H1 (cell line): ENCODE measurements at regions of chr20 and their contacts with region 1.

Region 1: GRCh38 chr20:50179507-50180016 is 11.1 kb upstream of the CEBPB start:
- DNase-seq: no peak
- H3K4me3 ChIP-seq: no peak overlapping the region
- H3K27ac ChIP-seq: no peak overlapping the region
- H3K4me1 ChIP-seq: peaks cover 0 to 3% (median 0%) of the 10 kb centered on the region in 4 experiments; a peak in 2 of 7 replicates
- H3K27me3 ChIP-seq: no peaks in the 10 kb centered on the region
- CTCF ChIP-seq: no peak
- EP300 ChIP-seq: no peak
- POLR2A ChIP-seq: no peak
- RAD21 ChIP-seq: no peak

Region 2: DNA sequence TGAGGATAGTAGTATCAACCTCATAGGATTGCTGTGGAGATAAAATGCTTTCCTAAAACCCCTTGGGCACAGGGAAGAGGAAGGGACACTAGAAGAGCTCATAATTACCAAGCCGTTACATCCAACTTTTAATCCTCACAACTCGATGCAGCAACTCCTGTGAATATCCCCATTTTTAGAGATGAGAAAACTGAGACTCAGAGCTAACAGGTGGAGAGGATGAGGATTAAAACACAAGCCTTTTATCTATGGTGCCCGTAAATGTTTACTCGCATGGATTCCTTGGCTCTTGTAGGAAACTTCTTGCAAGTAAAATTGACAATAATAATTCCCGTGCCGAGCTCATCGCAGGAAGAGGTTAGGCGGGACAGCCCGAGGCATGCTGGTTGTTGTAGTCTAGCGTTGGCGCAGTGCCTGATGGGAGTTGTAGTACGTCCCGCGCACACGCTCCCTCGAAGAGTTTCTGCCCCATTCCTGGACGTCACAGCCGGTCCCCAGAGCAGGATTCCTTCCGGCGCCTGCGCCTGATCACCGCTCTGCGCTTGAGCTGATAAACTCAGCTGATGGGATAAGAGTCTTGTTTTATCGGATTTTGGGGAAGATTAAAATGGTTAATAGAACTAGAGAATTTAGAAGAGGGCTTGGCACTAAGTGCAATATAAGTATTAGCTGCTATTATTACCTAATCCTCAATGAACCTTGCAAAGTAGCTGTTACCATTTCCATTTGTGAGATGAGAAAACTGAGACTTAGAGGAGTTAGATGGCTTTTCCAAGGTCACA is 63.8 kb before region 1 on chr20:
- CTCF ChIA-PET with region 1: interaction called, 160 read pairs
- POLR2A ChIA-PET with region 1: interaction called, 12 read pairs
- DNase-seq: peak; percentile 81 to 89
- H3K4me3 ChIP-seq: peak overlapping the region; percentile 69 to 84 (median 78)
- H3K27ac ChIP-seq: no peak overlapping the region
- H3K4me1 ChIP-seq: peaks cover 2 to 16% (median 7%) of the 10 kb centered on the region in 4 experiments; a peak in 6 of 7 replicates
- H3K27me3 ChIP-seq: no peaks in the 10 kb centered on the region
- CTCF ChIP-seq: no peak
- EP300 ChIP-seq: no peak
- POLR2A ChIP-seq: peak in 1 of 2 experiments; percentile 65; a peak in 2 of 3 replicates
- RAD21 ChIP-seq: no peak

Region 3: DNA sequence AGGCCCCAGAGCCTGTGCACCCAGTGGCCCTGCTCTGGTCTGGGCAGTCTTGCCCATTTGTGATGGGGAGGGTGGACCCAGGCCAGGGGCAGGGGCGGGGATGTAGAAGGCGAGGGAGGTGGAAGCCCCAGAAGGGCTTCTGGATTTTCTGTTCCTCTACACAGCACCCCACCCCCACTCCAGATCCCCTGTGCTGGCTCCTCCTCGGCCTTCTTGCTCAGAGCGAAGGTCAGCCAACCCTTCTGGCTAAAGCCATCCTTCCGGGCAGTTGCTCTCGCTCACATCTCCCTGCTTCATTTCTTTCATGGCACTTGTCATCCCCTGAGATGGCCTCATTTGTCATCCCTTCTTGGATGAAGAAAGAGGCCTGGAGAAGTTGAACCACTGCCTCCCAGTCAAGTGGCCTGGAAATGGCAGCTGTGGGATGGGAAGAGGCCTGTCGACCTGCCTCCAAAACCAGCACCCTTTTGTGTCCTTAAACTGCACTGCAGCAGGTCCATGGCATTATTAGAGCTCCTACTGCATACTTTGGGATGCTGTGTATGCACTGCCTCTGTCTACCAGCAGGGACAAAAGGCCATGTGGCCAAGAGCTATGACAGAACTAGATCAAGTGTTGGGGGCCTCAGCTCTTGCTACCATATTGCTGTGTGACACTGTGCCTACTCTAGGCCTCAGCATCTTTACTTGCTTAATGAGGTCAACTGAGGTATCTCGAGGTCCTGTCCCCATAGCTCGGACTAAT is 45.9 kb before region 1 on chr20:
- CTCF ChIA-PET with region 1: interaction called, 11 read pairs
- POLR2A ChIA-PET with region 1: no interaction called
- DNase-seq: no peak
- H3K4me3 ChIP-seq: no peak overlapping the region
- H3K27ac ChIP-seq: no peak overlapping the region
- H3K4me1 ChIP-seq: peaks cover 0 to 2% (median 0%) of the 10 kb centered on the region in 4 experiments; a peak in 1 of 7 replicates
- H3K27me3 ChIP-seq: no peaks in the 10 kb centered on the region
- CTCF ChIP-seq: peak in 1 of 3 experiments; percentile 27; a peak in 1 of 4 replicates
- EP300 ChIP-seq: no peak
- POLR2A ChIP-seq: no peak
- RAD21 ChIP-seq: no peak

Region 4: GRCh38 chr20:50153485-50154377 is 25.8 kb before region 1 on chr20 and contains the start of gene PEDS1:
- CTCF ChIA-PET with region 1: interaction called, 40 read pairs
- POLR2A ChIA-PET with region 1: no interaction called
- DNase-seq: peak in 1 of 2 experiments; percentile 87
- H3K4me3 ChIP-seq: peak within 1 kb of the TSS; percentile 61 to 98 (median 86)
- H3K27ac ChIP-seq: peak within 1 kb of the TSS; percentile 26; the same call in 1 of the 2 replicates
- H3K4me1 ChIP-seq: peaks cover 9 to 27% (median 16%) of the 10 kb centered on the region in 4 experiments
- H3K27me3 ChIP-seq: peaks cover 0 to 3% (median under 1%) of the 10 kb centered on the region in 4 experiments; a peak in 2 of 7 replicates
- CTCF ChIP-seq: no peak
- EP300 ChIP-seq: no peak
- POLR2A ChIP-seq: peak; percentile 70 to 75
- RAD21 ChIP-seq: no peak
- total RNA-seq, gene PEDS1: 28.9 and 33.3 TPM in 2 replicates

Region 5: DNA sequence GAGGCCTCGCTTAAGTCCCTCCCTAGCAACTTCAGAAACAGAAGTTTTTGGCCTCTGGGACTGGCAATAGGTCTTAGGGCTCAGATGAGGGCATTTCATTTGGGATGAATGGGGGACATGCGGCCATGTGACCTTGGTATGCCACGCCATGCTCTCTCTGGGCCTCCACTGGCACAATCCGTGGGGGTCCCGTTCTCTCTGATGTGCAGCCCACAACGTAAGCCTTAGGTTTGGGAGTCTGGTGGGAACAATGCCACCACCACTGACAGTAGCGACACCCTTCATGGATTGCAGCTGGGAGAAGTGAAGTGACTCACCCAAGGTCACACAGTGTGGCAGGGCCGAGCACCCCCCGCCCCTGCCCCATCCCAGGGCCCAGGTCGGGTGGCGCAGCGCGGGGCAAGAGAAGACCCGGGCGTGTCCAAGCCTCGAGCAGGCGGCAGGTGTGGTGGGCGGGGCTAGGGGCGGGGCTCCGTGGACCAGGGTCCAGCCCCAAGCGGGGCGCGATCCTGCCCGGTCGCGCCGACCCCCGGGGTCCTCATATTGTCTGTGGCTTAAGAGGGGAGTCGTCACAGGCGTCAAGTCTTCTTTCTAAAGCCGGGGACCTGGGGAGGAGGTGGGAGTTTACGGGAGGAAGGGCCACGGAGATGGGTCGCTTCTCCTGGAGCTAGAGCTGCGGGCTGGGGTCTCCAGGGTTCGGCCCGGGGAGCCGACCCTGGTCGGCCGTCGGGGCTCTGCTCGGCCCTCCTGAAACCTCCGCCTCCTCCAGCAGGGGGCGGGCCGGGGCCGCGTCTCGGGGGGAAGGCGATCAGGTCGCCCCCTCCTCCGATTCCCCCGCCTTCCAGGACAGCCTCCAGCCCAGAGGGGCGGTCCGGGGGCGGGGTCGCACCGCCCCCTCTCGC is 10.4 kb after region 1 on chr20:
- CTCF ChIA-PET with region 1: interaction called, 18 read pairs
- POLR2A ChIA-PET with region 1: interaction called, 6 read pairs
- DNase-seq: peak in 1 of 2 experiments; percentile 98
- H3K4me3 ChIP-seq: peak overlapping the region; percentile 44 to 95 (median 68)
- H3K27ac ChIP-seq: no peak overlapping the region
- H3K4me1 ChIP-seq: peaks cover 0 to 34% (median 20%) of the 10 kb centered on the region in 4 experiments; a peak in 6 of 7 replicates
- H3K27me3 ChIP-seq: peaks cover 0 to 2% (median 0%) of the 10 kb centered on the region in 4 experiments; a peak in 1 of 7 replicates
- CTCF ChIP-seq: peak; percentile 66 to 82 (median 73)
- EP300 ChIP-seq: no peak; a peak in 1 of 3 replicates
- POLR2A ChIP-seq: no peak
- RAD21 ChIP-seq: peak; percentile 83 to 86

Region 6: GRCh38 chr20:50346372-50347283 is 167.1 kb after region 1 on chr20:
- CTCF ChIA-PET with region 1: no interaction called
- POLR2A ChIA-PET with region 1: no interaction called
- DNase-seq: no peak
- H3K4me3 ChIP-seq: no peak overlapping the region
- H3K27ac ChIP-seq: no peak overlapping the region
- H3K4me1 ChIP-seq: 0 out of 7 replicates have a peak, but pooled peaks cover 0 to 3% (median 0%) of the 10 kb centered on the region in 4 experiments
- H3K27me3 ChIP-seq: no peaks in the 10 kb centered on the region; a peak in 1 of 7 replicates
- CTCF ChIP-seq: no peak
- EP300 ChIP-seq: no peak
- POLR2A ChIP-seq: no peak
- RAD21 ChIP-seq: no peak